ENCODE measurements at regions of chr19 and their contacts with region 1.

Region 1: DNA sequence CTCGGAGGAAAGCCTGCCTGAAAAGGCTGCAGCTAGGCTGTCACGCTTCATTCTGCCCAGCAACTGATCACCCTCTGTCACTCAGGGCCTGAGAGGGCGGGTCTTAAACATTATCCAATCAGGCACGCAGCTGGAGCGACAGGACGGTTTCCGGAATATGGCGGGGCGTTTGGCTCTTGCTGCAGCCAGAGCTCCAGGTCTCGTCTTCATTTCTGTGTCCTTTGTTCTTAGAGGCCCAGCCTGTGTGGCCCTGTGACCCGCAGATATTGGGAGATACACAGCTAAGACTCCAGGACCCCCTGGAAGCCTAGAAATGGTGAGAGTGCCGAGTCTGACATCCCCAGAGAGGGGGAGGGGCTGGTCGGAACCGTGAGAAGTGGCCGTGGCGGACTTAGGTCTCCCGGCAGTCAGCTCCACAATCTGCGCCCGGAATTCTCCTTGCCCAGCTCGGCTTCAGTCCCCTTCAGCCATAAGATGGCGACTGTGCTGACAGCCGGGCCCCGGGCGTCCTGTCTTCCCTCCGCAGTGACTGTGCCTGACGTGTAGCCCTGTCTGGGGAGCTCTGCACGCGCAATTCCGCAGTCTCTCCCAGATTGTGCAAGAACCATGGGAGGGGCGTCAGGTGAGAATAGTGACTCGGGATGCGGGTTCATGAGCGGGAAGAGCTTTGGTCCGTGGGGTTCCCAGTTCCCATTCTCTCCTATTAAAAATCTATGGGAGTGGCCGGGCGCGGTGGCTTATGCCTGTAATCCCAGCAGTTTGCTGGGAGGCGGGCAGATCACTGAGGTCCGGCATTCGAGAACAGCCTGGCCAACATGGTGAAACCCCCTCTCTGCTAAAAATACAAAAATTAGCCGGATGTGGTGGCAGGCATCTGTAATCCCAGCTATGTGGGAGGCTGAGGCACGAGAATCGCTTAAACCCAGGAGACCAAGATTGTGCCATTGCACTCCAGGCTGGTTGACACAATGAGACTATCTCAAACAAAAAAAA is at the start of gene ZNF429:
- DNase-seq: peak; percentile 96
- total RNA-seq, gene ZNF429: 10.8 TPM

Region 2: DNA sequence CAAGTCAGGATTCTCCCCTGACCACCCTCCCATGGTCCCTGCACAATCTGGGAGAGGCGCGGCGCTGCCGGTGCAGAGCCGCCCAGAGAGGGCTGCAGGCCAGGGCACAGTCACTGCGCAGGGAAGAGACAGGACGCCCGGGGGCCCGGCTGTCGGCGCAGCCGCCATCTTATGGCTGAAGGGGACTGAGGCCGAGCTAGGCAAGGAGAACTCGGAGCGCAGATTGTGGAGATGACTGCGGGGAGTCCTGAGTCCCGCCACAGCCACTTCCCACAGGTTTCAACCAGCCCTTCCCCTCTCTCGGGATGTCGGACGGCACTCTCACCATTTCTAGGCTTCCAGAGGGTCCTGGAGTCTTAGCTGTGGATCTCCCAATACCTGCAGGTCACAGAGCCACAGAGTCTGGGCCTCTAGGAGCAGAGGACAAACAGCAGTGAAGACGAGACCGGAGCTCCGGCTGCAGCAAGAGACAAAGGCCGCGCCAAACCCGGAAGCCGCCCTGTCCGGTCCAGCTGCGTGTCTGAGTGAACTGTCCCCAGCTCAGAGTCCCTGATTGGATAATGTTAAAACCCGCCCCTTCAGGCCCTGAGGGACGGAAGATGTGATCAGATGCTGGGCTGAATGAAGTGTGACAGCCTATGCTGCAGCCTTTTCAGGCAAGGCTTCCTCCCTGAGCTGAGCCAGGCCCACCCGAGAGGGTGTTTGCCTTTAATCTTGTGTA is 176.7 kb before region 1 on chr19 and contains the start of gene ZNF708:
- intact Hi-C with region 1: loop called (anchors 10 kb)
- DNase-seq: peak; percentile 95
- total RNA-seq, gene ZNF708: 6.8 TPM

Region 3: GRCh38 chr19:21463449-21464105 is 42.2 kb before region 1 on chr19:
- intact Hi-C with region 1: no loop called
- DNase-seq: peak; percentile 78